Upper lobe of right lung (tissue), 1 donor: ENCODE measurements at regions of chr19 and their contacts with region 1.

Region 1: GRCh38 chr19:29873024-29873800 is 61.4 kb downstream of the CCNE1 start:
- DNase-seq: peak; percentile 75
- ATAC-seq: peak; percentile 80
- H3K4me3 ChIP-seq: peak overlapping the region; percentile 39
- H3K27ac ChIP-seq: no peak overlapping the region
- H3K4me1 ChIP-seq: peaks cover 7% of the 10 kb centered on the region
- H3K27me3 ChIP-seq: peaks cover 36% of the 10 kb centered on the region
- CTCF ChIP-seq: peak; percentile 83

Region 2: GRCh38 chr19:29453596-29453995 is 419.6 kb before region 1 on chr19:
- intact Hi-C with region 1: no loop called
- DNase-seq: no peak
- ATAC-seq: no peak
- H3K4me3 ChIP-seq: no peak overlapping the region
- H3K27ac ChIP-seq: no peak overlapping the region
- H3K4me1 ChIP-seq: no peaks in the 10 kb centered on the region
- H3K27me3 ChIP-seq: no peaks in the 10 kb centered on the region
- CTCF ChIP-seq: no peak

Region 3: GRCh38 chr19:29768166-29768565 is 105.0 kb before region 1 on chr19:
- intact Hi-C with region 1: loop called (anchors 5 kb)
- DNase-seq: no peak
- ATAC-seq: no peak
- H3K4me3 ChIP-seq: no peak overlapping the region
- H3K27ac ChIP-seq: no peak overlapping the region
- H3K4me1 ChIP-seq: no peaks in the 10 kb centered on the region
- H3K27me3 ChIP-seq: no peaks in the 10 kb centered on the region
- CTCF ChIP-seq: no peak

Region 4: GRCh38 chr19:30001301-30001700 is 128.1 kb after region 1 on chr19:
- intact Hi-C with region 1: no loop called
- DNase-seq: no peak
- ATAC-seq: no peak
- H3K4me3 ChIP-seq: no peak overlapping the region
- H3K27ac ChIP-seq: no peak overlapping the region
- H3K4me1 ChIP-seq: no peaks in the 10 kb centered on the region
- H3K27me3 ChIP-seq: no peaks in the 10 kb centered on the region
- CTCF ChIP-seq: no peak